Activated CD8-positive, alpha-beta T cell treated with anti-CD3 and anti-CD28 coated beads, Interleukin-2, amount 10 ng/mL, durations not matched to agents 7 days and 5 days (primary cell): ENCODE measurements at regions of chr17 and their contacts with region 1.

Region 1: DNA sequence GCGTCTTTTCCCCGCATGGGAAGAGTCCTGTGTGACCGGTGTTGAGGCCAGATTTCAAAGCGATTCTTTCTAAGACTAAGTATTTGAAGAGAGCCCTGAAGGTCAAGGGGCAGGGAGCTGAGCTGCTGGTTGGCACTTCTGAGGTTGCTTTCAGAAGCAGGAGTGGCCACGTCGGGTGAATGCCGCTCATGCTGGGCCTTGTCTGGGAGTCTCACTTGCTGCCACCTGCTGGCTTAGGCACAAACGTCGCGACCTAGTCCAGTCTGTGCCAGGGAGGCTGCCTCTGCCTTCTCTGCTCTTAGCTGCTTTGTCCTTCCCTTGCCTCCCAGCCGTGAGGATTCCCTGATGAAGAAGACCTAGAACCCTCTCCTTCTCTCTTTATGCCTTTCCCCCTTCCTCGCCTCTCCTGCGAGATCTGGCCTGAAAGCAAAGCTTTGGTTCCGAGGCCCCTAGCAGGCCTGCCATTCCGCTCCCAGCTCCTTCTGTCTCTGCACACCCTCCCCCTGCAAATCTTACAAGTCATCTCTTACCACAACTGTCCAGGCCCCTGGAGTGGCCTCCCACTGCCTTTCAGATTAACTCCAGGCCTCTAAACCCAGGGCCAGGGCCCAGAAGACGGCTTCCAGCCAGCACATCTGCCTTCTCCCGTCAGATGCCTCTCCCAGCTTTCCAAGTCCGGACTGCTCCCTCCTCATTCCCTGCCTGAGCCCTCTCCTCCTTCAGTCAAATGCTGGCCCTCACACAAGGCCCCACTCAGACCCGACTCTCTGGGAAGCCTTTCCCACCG is 11.4 kb downstream of the CTNS start:
- DNase-seq: peak; percentile 65
- ATAC-seq: peak; percentile 89
- H3K4me3 Mint-ChIP-seq: no peak overlapping the region
- H3K27ac Mint-ChIP-seq: no peak overlapping the region
- H3K4me1 Mint-ChIP-seq: peaks cover 2% of the 10 kb centered on the region
- H3K27me3 Mint-ChIP-seq: no peaks in the 10 kb centered on the region

Region 2: GRCh38 chr17:3602499-3602898 is 45.5 kb before region 1 on chr17:
- CTCF ChIA-PET with region 1: interaction called, 16 read pairs
- POLR2A ChIA-PET with region 1: no interaction called
- DNase-seq: peak; percentile 34
- ATAC-seq: peak; percentile 67
- H3K4me3 Mint-ChIP-seq: no peak overlapping the region
- H3K27ac Mint-ChIP-seq: no peak overlapping the region
- H3K4me1 Mint-ChIP-seq: peaks cover 2% of the 10 kb centered on the region
- H3K27me3 Mint-ChIP-seq: no peaks in the 10 kb centered on the region

Region 3: DNA sequence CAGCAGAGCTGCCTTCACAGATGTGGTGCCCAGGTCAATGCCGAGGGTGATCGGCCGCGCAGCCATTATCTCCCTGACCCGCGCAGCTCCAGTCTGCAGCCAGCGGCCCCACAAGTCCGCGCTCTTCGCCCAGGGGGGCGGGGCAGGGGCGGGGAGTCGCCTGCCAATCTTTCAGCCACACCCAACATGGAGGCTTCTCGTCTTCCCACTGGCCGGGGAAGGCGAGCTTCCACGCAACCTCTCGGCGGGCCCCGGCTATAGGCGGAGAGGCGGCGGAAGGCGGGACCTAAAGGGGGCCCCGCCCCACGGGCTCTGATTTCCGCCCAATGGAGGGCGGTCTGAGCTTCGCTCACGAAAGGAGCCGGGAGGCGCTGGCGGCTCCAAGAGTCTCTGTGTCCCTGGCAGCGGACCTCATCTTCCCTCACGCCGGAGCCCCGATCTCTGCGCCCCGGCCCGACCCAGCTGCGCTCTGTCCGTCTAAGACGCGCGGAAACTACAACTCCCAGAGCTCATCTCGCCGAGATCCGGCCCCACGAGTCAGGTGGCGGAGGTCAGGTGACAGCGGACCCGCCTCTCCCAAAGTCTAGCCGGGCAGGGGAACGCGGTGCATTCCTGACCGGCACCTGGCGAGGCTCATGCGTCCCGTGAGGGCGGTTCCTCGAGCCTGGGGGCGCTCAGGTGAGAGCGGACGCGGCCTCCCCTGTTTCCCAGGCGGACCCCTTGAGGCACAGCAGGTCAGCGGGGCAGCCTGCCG is 11.6 kb before region 1 on chr17 and contains the starts of genes CTNS and SHPK:
- CTCF ChIA-PET with region 1: interaction called, 20 read pairs
- POLR2A ChIA-PET with region 1: no interaction called
- DNase-seq: peak; percentile 97
- ATAC-seq: peak; percentile 98
- H3K4me3 Mint-ChIP-seq: peak within 1 kb of the TSS; percentile 91
- H3K27ac Mint-ChIP-seq: peak within 1 kb of the TSS; percentile 99
- H3K4me1 Mint-ChIP-seq: peaks cover 44% of the 10 kb centered on the region
- H3K27me3 Mint-ChIP-seq: no peaks in the 10 kb centered on the region
- total RNA-seq, gene CTNS: 7.7 to 9.7 TPM
- total RNA-seq, gene SHPK: 12.0 to 12.5 TPM

Region 4: DNA sequence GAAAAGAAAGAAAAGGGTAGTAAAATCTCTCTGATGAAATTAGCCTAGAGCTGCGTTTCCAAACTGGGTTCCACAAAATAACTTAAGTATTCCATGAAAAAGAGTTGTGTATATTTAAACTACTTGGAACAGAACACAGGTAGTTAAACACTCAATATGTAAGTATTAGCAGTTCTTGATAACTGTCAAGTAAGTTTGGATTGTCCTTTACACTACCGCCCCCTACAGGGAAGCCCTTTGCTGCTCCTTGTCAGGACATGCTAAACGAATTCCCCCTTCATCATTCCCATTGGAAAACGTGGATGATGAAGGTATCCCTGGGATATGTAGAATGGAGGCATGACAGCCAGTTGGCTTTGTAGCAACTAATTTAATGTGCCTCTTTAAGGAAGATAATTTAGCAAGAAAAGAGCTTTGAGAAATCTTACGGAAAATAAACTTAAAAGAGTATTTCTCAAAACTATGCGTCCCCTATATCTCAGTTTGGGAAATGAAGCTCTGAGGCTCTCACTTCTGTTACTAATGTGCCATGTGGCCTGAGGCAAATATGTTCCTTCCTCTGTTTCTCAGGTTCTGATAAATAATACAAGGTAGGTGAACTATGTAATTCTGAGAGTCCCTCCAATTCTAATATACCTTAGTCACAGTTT is 179.3 kb after region 1 on chr17:
- CTCF ChIA-PET with region 1: no interaction called
- POLR2A ChIA-PET with region 1: no interaction called
- DNase-seq: peak; percentile 83
- ATAC-seq: no peak
- H3K4me3 Mint-ChIP-seq: no peak overlapping the region
- H3K27ac Mint-ChIP-seq: no peak overlapping the region
- H3K4me1 Mint-ChIP-seq: peaks cover 9% of the 10 kb centered on the region
- H3K27me3 Mint-ChIP-seq: no peaks in the 10 kb centered on the region